ENCODE measurements at regions of chr2 and their contacts with region 1.

Region 1: DNA sequence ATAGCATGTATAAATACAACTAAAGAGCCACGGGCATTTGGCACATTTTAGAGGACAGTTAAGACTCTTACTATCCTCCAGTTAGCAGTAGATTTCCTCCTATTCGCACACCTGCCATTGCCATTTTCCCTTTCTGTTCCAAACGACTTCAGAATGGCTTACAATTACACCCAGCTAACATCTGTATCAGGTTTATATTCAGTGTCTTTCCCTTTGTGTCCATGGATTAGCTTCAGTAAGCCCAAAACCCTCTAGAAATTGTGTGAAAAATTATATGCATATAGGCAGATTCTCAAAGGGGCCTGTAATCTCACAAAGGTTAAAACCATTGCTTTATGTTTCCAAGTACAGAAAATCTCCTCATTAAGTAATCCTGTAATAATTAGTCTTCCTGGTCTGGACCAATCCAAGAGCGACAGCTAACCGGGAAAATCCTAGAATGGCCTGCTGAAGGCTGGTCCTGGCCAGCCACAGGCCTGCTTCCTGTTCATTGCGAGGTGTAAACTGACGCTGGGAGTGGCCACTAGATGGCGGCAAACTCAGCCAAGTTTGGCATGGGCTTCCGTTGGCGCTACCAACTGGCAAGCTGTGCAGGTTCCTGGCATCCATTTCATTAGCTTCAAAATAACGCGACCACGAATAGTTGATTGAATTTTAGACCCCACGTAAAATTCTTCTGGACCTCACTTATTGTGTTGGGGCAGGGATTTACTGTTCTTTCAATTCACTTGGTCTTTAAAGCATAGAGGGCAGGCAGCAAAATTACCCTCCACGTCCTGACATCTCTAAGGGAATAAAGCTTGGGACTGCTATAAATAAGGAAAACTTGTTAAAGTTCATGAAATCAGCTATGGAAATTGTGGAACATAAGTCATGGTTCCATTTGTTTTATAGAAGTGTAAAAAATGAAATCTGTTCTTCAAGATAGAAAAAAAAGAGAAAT is 17.1 kb downstream of the ARHGAP25 start:
- DNase-seq: peak; percentile 91
- H3K4me3 ChIP-seq: no peak overlapping the region
- H3K27ac ChIP-seq: no peak overlapping the region
- H3K4me1 ChIP-seq: peaks cover 7% of the 10 kb centered on the region
- H3K27me3 ChIP-seq: peaks cover 0 to 4% of the 10 kb centered on the region in 2 experiments
- CTCF ChIP-seq: peak; percentile 88 to 92
- POLR2A ChIP-seq: no peak

Region 2: GRCh38 chr2:68500649-68501048 is 251.0 kb before region 1 on chr2:
- CTCF ChIA-PET with region 1: no interaction called
- POLR2A ChIA-PET with region 1: no interaction called
- dilution Hi-C with region 1: no loop called
- intact Hi-C with region 1: no loop called
- DNase-seq: no peak
- H3K4me3 ChIP-seq: no peak overlapping the region
- H3K27ac ChIP-seq: no peak overlapping the region
- H3K4me1 ChIP-seq: no peaks in the 10 kb centered on the region
- H3K27me3 ChIP-seq: no peaks in the 10 kb centered on the region
- CTCF ChIP-seq: no peak
- POLR2A ChIP-seq: no peak

Region 3: DNA sequence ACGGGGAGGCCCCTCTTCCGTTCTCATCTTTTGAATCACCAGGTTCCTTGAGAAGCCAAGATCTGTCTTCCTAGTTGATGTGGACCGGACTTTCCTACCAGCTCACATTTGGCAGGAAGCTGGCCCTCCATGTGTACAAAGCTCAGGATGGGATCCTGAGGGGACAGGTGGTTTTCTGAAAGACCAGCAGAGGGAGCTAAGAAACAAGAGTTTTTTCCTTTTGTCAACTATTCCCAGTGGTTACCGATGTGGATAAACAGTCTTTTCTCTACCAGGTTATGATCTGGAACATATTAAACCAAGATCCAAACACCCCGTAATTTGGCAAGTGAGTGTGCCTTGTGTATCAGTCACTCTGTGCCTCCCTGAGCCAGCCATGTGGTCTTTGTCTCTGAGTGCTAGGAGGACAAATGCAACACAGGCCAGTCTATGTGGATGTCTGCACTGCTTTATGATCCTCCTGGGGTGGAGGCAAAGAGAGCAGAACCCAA is 42.2 kb before region 1 on chr2:
- CTCF ChIA-PET with region 1: interaction called, 49 read pairs
- POLR2A ChIA-PET with region 1: no interaction called
- dilution Hi-C with region 1: no loop called
- intact Hi-C with region 1: loop called (anchors 1 kb)
- DNase-seq: peak; percentile 52
- H3K4me3 ChIP-seq: no peak overlapping the region
- H3K27ac ChIP-seq: no peak overlapping the region
- H3K4me1 ChIP-seq: no peaks in the 10 kb centered on the region
- H3K27me3 ChIP-seq: peaks cover 18 to 45% of the 10 kb centered on the region in 2 experiments
- CTCF ChIP-seq: peak; percentile 72 to 74
- POLR2A ChIP-seq: no peak

Region 4: GRCh38 chr2:68774569-68775271 is 23.1 kb after region 1 on chr2:
- CTCF ChIA-PET with region 1: interaction called, 15 read pairs
- POLR2A ChIA-PET with region 1: no interaction called
- dilution Hi-C with region 1: no loop called
- intact Hi-C with region 1: loop called (anchors 1 kb)
- DNase-seq: peak; percentile 77
- H3K4me3 ChIP-seq: peak overlapping the region in 1 of 3 experiments; percentile 12
- H3K27ac ChIP-seq: peak overlapping the region; percentile 53
- H3K4me1 ChIP-seq: peaks cover 19% of the 10 kb centered on the region
- H3K27me3 ChIP-seq: no peaks in the 10 kb centered on the region
- CTCF ChIP-seq: peak in 1 of 2 donors; percentile 22
- POLR2A ChIP-seq: no peak

Region 5: GRCh38 chr2:68837164-68837860 is 85.6 kb after region 1 on chr2:
- CTCF ChIA-PET with region 1: interaction called, 47 read pairs
- POLR2A ChIA-PET with region 1: interaction called, 14 read pairs
- dilution Hi-C with region 1: no loop called
- intact Hi-C with region 1: loop called (anchors 1 kb)
- DNase-seq: peak; percentile 73
- H3K4me3 ChIP-seq: no peak overlapping the region
- H3K27ac ChIP-seq: no peak overlapping the region
- H3K4me1 ChIP-seq: peaks cover 10% of the 10 kb centered on the region
- H3K27me3 ChIP-seq: no peaks in the 10 kb centered on the region
- CTCF ChIP-seq: peak; percentile 60 to 69
- POLR2A ChIP-seq: no peak

Region 6: DNA sequence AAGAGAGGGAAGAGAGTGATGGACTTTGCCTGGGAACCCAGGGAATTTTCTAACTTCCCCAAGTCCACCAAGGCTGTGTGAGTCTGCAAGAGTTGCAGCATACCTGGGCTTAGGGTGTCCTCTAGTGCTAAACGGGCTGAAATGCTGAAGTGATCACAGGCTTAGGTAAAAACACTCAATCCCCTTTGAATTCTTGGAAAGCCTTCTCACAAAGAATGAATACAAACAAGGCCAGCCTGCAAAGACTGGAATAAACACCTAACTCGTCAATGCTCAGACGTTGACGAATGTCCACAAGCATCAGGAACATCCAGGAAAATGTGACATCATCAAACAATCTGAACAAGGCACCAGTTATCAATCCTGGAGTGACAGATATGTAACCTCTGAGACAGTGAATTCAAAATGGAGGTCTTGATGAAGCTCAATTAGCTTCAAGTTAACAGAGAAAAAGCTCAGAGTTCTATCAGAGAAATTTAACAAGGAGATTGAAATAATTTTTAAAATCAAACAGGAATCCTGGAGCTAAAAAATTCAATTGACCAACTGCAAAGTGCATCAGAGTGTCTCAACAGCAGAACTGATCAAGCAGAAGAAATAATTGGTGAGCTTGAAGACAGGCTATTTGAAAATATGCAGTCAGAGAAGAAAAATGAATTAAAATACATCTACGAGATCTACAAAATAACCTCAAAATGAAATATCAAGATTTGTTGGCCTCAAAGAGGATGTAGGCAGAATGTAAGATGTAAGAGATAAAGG is 149.7 kb after region 1 on chr2:
- CTCF ChIA-PET with region 1: interaction called, 146 read pairs
- POLR2A ChIA-PET with region 1: no interaction called
- dilution Hi-C with region 1: no loop called
- intact Hi-C with region 1: loop called (anchors 2 kb)
- DNase-seq: peak; percentile 19
- H3K4me3 ChIP-seq: no peak overlapping the region
- H3K27ac ChIP-seq: no peak overlapping the region
- H3K4me1 ChIP-seq: peaks cover 4% of the 10 kb centered on the region
- H3K27me3 ChIP-seq: peaks cover 0 to 2% of the 10 kb centered on the region in 2 experiments
- CTCF ChIP-seq: peak; percentile 22 to 37
- POLR2A ChIP-seq: no peak

Region 7: DNA sequence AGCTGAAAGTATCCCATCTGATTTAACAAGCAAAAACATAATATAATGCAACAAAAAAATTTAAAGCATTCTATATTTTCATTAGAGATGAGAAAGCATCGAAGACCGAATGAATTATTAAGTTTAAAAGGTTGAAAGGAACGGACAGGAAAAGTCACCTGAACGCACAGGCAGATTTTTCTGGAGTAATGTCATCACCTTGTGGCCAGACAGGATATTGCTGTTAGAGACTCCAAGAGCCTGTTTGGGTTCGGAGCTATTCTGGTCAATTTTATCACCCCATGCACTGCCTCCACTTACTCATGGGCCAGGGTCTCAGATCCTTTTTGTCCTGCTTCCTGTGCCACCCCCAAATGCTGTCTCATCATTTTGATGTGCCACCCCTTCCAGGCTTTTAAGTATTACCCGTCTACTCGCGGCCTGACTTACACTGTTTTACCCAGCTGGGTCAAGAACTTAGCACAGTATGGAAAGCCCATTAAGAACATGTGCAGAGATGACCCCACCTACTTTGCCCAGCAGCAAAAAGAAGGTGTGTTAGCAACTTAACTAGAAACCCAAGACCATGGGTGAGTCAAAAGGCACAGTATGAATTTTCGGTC is 173.7 kb after region 1 on chr2:
- CTCF ChIA-PET with region 1: interaction called, 149 read pairs
- POLR2A ChIA-PET with region 1: no interaction called
- dilution Hi-C with region 1: loop called (anchors 25 kb)
- intact Hi-C with region 1: loop called (anchors 1 kb)
- DNase-seq: peak; percentile 58
- H3K4me3 ChIP-seq: no peak overlapping the region
- H3K27ac ChIP-seq: no peak overlapping the region
- H3K4me1 ChIP-seq: no peaks in the 10 kb centered on the region
- H3K27me3 ChIP-seq: peaks cover 2 to 9% of the 10 kb centered on the region in 2 experiments
- CTCF ChIP-seq: peak; percentile 83 to 87
- POLR2A ChIP-seq: no peak